Lower leg skin (tissue), 4 donors: ENCODE measurements at regions of chr5 and their contacts with region 1.

Region 1: DNA sequence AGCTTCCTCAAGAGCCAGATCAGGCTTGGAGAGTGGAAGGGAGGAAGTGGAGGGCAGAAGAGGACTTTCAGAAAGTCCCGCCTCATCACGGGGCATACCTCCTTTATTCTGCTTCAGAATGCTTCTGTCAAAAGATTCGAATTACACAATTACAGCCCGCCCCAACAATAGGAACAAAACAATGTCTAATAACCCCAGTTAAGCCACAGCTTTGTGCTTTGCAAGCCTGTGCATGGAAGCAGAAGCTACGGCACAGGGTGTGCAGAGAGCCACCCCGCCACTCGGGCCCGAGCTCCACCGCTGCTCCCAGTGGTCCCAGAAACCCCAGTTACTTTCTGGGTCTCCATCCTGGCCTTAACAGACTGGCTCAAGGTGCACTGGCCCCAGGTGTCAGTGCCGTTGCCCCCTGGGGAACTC is 23.5 kb downstream of the HNRNPH1 start:
- DNase-seq: no peak
- H3K4me3 ChIP-seq: no peak overlapping the region
- CTCF ChIP-seq: no peak
- POLR2A ChIP-seq: no peak

Region 2: GRCh38 chr5:179616002-179616594 is 16.1 kb after region 1 on chr5:
- intact Hi-C with region 1: loop called (anchors 1 kb)
- DNase-seq: no peak
- H3K4me3 ChIP-seq: no peak overlapping the region
- CTCF ChIP-seq: no peak
- POLR2A ChIP-seq: no peak